Ascending aorta (tissue), 2 donors: ENCODE measurements at regions of chr9 and their contacts with region 1.

Region 1: GRCh38 chr9:34252670-34253459 is 74.0 kb downstream of the UBAP1 start:
- DNase-seq: peak in 1 of 2 donors; percentile 71
- H3K4me3 ChIP-seq: no peak overlapping the region
- H3K27ac ChIP-seq: peak overlapping the region; percentile 79 to 81
- H3K4me1 ChIP-seq: peaks cover 16 to 48% of the 10 kb centered on the region in 2 donors
- H3K27me3 ChIP-seq: no peaks in the 10 kb centered on the region
- CTCF ChIP-seq: peak; percentile 59 to 86 (median 77)

Region 2: DNA sequence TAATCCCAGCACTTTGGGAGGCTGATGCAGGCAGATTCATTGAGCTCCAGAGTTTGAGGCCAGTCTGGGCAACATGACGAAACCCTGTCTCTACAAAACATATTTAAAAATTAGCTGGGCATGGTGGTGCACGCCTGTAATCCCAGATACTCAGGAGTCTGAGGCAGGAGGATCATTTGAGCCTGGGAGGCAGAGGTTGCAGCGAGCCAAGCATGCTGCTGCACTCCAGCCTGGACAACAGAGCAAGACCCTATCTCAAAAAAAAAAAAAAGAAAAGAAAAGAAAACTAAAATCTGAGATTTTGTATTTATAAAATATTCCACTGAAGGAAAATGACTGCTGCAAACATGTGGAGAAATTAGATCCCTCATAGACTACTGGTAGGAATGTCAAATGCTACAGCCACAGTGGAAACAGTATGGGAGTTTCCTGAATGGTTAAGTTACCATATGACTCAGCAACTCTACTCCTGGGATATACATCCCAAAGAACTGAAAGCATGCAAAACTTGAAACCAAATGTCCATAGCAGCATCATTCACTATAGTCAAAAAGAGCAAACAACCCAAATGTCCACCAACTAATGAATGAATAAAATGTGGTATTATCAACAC is 310.3 kb before region 1 on chr9:
- intact Hi-C with region 1: loop called (anchors 10 kb)
- DNase-seq: no peak
- H3K4me3 ChIP-seq: no peak overlapping the region
- H3K27ac ChIP-seq: no peak overlapping the region
- H3K4me1 ChIP-seq: peaks cover 4 to 7% of the 10 kb centered on the region in 2 donors
- H3K27me3 ChIP-seq: no peaks in the 10 kb centered on the region
- CTCF ChIP-seq: no peak

Region 3: GRCh38 chr9:34048923-34049697 is 203.8 kb before region 1 on chr9:
- intact Hi-C with region 1: loop called (anchors 2 kb)
- DNase-seq: peak; percentile 94 to 98
- H3K4me3 ChIP-seq: peak overlapping the region; percentile 95 to 98
- H3K27ac ChIP-seq: peak overlapping the region; percentile 85 to 95
- H3K4me1 ChIP-seq: peaks cover 6 to 9% of the 10 kb centered on the region in 2 donors
- H3K27me3 ChIP-seq: no peaks in the 10 kb centered on the region
- CTCF ChIP-seq: no peak

Region 4: DNA sequence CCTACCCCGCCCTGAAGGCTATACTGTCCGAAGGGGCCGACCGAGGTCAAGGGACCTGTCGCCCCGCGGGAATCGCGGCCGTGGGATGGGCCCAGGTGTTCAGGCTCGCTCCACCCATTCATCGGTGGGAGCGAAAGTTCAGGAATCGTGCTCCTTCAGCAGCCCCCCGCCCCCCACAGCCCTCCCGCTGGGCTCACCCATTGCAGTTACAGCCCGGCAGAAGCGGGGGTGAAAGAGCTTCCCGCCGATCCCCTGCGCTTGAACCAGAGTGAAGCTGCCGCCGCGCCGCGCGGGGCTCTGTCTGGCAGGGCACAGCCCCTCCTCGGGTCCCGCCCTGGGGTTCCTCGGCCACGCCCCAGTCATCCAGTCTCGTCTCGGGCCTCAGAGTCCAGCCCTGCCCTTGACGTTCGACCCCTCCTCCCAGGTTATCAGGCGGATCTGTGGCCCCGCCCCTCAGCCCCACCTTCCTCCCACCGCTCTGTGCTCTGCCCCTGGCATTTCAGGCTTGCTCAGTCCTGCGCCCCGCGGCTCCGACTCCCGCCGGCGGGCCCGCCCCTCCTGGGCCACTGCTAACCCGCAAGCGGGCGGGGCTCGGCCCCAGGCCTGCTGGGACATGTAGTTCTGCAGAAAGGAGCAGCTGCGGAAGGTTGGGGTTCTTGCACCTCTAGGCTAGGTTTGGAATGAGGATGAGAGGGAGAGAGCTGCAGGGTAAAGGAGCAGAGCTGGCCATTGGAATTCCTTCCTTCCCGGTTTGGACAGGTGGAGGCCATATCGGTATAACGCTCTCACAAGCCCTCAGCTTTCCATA is 123.9 kb after region 1 on chr9 and contains the start of gene MYORG:
- intact Hi-C with region 1: loop called (anchors 5 kb)
- DNase-seq: peak; percentile 88 to 97
- H3K4me3 ChIP-seq: peak within 1 kb of the TSS; percentile 85 to 86
- H3K27ac ChIP-seq: peak within 1 kb of the TSS; percentile 74 to 78
- H3K4me1 ChIP-seq: peaks cover 7 to 16% of the 10 kb centered on the region in 2 donors
- H3K27me3 ChIP-seq: no peaks in the 10 kb centered on the region
- CTCF ChIP-seq: no peak
- total RNA-seq, gene MYORG: 11.0 TPM